ENCODE measurements at regions of chr4 and their contacts with region 1.

Region 1: DNA sequence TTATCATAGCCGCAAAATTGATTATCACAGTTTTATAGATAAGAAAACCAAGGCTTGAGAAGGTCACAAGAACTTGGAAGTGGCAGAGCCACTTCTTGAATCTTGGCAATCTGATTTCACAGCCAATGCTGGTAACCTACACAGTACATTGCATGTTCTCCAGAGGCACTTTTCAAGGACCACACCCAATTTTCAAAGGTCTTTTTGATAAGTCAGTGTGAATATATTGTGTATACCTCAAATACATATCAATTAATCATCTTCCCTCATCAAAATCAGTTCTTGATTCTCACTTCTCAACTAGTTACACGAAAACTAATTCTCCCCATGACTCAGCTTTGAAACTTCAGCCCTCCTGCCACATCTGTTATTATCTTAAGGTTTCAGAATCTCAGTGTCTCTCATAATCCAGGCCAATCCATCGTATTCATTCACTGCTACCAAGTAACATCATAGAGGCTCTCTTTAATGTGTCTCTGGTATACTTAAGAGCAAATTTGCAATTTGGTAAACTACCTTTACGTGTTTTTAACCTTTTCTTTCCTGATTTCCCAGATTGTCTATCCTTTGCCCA is 16.8 kb downstream of the CAMK2D start:
- DNase-seq: no peak
- ATAC-seq: no peak
- H3K4me3 ChIP-seq: no peak overlapping the region
- H3K27ac ChIP-seq: peak overlapping the region in 1 of 10 donors; percentile 0
- H3K4me1 ChIP-seq: peaks cover 0 to 75% (median 33%) of the 10 kb centered on the region in 9 donors
- H3K27me3 ChIP-seq: no peaks in the 10 kb centered on the region
- CTCF ChIP-seq: no peak

Region 2: GRCh38 chr4:113555868-113556267 is 188.9 kb before region 1 on chr4:
- intact Hi-C with region 1: loop called in 1 of 10 experiments (anchors 10 kb)
- DNase-seq: peak; percentile 21 to 26
- ATAC-seq: peak; percentile 70 to 97 (median 89)
- H3K4me3 ChIP-seq: no peak overlapping the region
- H3K27ac ChIP-seq: peak overlapping the region; percentile 23 to 86 (median 79)
- H3K4me1 ChIP-seq: peaks cover 0 to 37% (median 26%) of the 10 kb centered on the region in 9 donors
- H3K27me3 ChIP-seq: no peaks in the 10 kb centered on the region
- CTCF ChIP-seq: no peak

Region 3: DNA sequence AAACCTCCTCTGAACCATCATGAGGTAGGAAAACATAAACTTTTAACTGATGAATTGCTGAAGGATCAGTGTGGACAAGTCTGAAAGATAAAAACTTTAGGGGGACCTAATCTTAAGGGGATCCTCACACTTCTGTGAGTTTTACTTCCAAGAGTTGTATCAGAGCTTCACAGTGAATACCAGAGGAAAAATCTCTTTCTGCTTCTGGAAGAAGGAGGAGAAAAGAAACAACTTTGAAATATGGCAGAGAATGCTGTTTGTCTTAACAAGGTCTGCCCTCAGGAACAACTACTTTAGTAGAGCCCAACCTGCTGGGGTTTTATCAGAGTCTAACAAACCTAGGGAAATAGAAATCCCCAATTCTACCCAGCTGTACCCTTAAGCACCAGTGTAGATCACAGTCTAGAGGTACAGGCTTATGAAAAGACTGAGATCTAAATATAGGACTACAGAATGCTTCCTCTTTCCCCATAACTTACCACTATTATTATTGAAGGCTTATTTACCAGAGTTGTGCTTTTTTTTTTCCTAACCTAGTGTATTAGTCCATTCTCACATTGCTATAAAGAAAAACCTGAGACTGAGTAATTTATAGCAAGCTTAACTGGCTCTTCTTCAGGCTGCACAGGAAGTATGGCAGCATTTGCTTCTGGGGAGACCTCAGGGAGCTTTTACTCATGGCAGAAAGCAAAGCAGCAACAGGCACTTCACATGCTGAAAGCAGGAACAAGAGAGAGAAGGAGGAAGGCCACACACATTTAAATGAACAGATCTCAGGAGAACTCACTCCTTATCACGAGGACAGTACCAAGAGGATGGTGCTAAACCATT is 151.1 kb before region 1 on chr4:
- intact Hi-C with region 1: no loop called
- DNase-seq: no peak
- ATAC-seq: peak in 3 of 8 donors; percentile 32 to 50 (median 40)
- H3K4me3 ChIP-seq: no peak overlapping the region
- H3K27ac ChIP-seq: peak overlapping the region in 7 of 10 donors; percentile 18 to 63 (median 39)
- H3K4me1 ChIP-seq: peaks cover 0 to 39% (median 22%) of the 10 kb centered on the region in 9 donors
- H3K27me3 ChIP-seq: no peaks in the 10 kb centered on the region
- CTCF ChIP-seq: no peak

Region 4: GRCh38 chr4:113618205-113618604 is 126.5 kb before region 1 on chr4:
- intact Hi-C with region 1: loop called in 1 of 10 experiments (anchors 10 kb)
- DNase-seq: no peak
- ATAC-seq: peak in 3 of 8 donors; percentile 39 to 56 (median 40)
- H3K4me3 ChIP-seq: no peak overlapping the region
- H3K27ac ChIP-seq: peak overlapping the region in 7 of 10 donors; percentile 4 to 62 (median 51)
- H3K4me1 ChIP-seq: peaks cover 0 to 82% (median 42%) of the 10 kb centered on the region in 9 donors
- H3K27me3 ChIP-seq: no peaks in the 10 kb centered on the region
- CTCF ChIP-seq: no peak

Region 5: GRCh38 chr4:113692809-113693411 is 51.8 kb before region 1 on chr4:
- intact Hi-C with region 1: loop called in 3 of 10 experiments (anchors 5 to 10 kb)
- DNase-seq: no peak
- ATAC-seq: peak in 1 of 8 donors; percentile 35
- H3K4me3 ChIP-seq: no peak overlapping the region
- H3K27ac ChIP-seq: peak overlapping the region in 3 of 10 donors; percentile 0 to 56 (median 46)
- H3K4me1 ChIP-seq: peaks cover 2 to 85% (median 44%) of the 10 kb centered on the region in 9 donors
- H3K27me3 ChIP-seq: no peaks in the 10 kb centered on the region
- CTCF ChIP-seq: no peak

Region 6: GRCh38 chr4:113700602-113701150 is 44.1 kb before region 1 on chr4:
- intact Hi-C with region 1: loop called in 3 of 10 experiments (anchors 5 to 10 kb)
- DNase-seq: no peak
- ATAC-seq: peak in 5 of 8 donors; percentile 16 to 65 (median 33)
- H3K4me3 ChIP-seq: no peak overlapping the region
- H3K27ac ChIP-seq: peak overlapping the region in 1 of 10 donors; percentile 2
- H3K4me1 ChIP-seq: peaks cover 0 to 36% (median 17%) of the 10 kb centered on the region in 9 donors
- H3K27me3 ChIP-seq: no peaks in the 10 kb centered on the region
- CTCF ChIP-seq: no peak

Region 7: GRCh38 chr4:113801882-113802281 is 57.1 kb after region 1 on chr4:
- intact Hi-C with region 1: no loop called
- DNase-seq: no peak
- ATAC-seq: no peak
- H3K4me3 ChIP-seq: no peak overlapping the region
- H3K27ac ChIP-seq: no peak overlapping the region
- H3K4me1 ChIP-seq: no peaks in the 10 kb centered on the region
- H3K27me3 ChIP-seq: no peaks in the 10 kb centered on the region
- CTCF ChIP-seq: no peak

Region 8: DNA sequence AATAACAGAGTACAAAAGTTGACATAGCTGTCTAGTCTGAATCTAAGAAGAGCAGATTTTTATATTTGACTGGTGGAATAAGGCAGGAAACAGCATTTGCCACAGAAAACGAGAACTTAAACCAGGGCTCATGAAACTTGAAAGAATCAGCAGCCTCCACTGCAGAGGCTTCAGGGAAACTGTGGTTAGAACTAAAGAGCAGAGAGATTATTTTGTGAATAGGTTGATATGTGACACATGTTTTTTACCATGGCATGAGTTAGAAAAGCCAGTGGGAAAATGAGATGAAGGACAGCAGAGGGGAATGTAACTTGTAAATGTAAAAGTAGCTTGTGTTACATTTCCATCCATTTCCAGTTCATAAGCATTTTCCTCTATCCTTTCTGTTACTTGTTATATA is 80.5 kb after region 1 on chr4:
- intact Hi-C with region 1: no loop called
- DNase-seq: no peak
- ATAC-seq: peak in 1 of 8 donors; percentile 31
- H3K4me3 ChIP-seq: no peak overlapping the region
- H3K27ac ChIP-seq: peak overlapping the region in 1 of 10 donors; percentile 63
- H3K4me1 ChIP-seq: peaks cover 0 to 44% (median 16%) of the 10 kb centered on the region in 9 donors
- H3K27me3 ChIP-seq: no peaks in the 10 kb centered on the region
- CTCF ChIP-seq: no peak

Measured in heart right ventricle (tissue), 16 donors.